Activated CD4-positive, alpha-beta T cell treated with anti-CD3 and anti-CD28 coated beads for 36 hours (primary cell): ENCODE measurements at regions of chr21 and their contacts with region 1.

Region 1: DNA sequence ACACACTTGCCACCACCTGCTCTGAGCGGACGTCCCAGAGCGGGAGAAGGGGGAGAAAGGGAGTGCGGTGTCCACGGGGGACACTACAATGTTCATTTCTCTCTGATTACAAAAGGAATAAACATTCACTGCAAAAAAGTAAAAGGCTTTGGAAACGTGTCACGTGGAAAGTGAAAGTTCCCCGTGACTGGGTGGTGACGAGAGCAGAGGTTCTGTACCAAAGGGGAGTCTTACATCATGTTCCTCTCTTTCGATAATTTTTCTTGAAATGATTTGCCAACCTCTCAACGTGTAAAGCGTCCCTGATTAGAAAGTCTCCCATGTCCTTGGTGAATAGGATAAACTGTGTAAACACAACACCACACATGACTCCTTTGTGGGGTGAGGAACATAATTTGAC is 22.0 kb upstream of the PRDM15 start:
- DNase-seq: peak; percentile 79
- ATAC-seq: peak; percentile 74
- H3K4me3 Mint-ChIP-seq: peak overlapping the region; percentile 32
- H3K27ac Mint-ChIP-seq: peak overlapping the region; percentile 95
- H3K4me1 Mint-ChIP-seq: peaks cover 35% of the 10 kb centered on the region
- H3K27me3 Mint-ChIP-seq: no peaks in the 10 kb centered on the region

Region 2: DNA sequence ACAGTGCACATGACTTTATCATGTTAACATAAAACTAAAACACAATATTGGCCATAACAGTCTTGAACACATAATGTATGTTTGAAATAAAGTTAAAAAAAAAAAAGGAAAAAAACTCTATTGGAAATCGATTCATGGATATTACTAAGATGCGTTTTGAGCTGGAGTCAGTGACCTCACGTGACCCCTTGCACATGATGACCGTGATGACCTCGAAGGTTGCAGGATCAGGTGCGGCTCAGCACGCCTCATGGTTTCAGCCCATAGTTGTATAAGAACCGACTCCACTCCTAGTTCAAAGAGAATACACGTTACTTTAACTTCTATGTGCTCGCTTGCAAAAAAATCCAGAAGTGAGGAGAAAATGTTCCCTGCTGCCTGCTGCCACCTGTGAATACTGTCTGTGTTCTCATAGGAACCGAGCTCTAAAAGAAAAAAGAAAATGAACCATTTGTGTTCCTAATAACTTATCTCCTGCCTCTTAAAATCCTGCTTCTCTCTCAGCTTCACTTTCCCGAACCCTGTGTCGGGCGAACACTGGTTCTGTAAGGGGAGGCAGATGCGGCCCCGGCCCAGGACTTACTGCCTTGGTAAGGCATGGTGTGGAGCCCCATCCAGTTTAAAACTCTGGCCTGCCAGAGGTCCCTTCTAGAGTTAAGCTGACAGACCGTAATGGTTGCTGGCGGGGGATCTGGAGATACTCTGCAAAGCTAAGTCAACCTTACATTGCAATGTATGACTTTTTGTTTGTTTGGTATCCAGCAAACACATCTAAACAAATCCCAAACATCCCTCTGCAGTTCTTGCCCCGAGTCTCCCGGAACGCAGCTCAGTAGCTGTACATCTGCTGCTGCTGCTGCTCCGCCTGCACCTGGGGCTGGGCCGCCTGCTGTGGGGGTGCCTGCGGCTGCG is 100.4 kb before region 1 on chr21:
- CTCF ChIA-PET with region 1: no interaction called
- POLR2A ChIA-PET with region 1: no interaction called
- intact Hi-C with region 1: no loop called
- DNase-seq: no peak
- ATAC-seq: no peak
- H3K4me3 Mint-ChIP-seq: no peak overlapping the region
- H3K27ac Mint-ChIP-seq: no peak overlapping the region
- H3K4me1 Mint-ChIP-seq: no peaks in the 10 kb centered on the region
- H3K27me3 Mint-ChIP-seq: no peaks in the 10 kb centered on the region

Region 3: GRCh38 chr21:41921021-41921420 is 19.9 kb after region 1 on chr21:
- CTCF ChIA-PET with region 1: interaction called, 7 read pairs
- POLR2A ChIA-PET with region 1: no interaction called
- intact Hi-C with region 1: loop called in 1 of 2 experiments (anchors 1 kb)
- DNase-seq: no peak
- ATAC-seq: no peak
- H3K4me3 Mint-ChIP-seq: no peak overlapping the region
- H3K27ac Mint-ChIP-seq: no peak overlapping the region
- H3K4me1 Mint-ChIP-seq: peaks cover 40% of the 10 kb centered on the region
- H3K27me3 Mint-ChIP-seq: no peaks in the 10 kb centered on the region

Region 4: DNA sequence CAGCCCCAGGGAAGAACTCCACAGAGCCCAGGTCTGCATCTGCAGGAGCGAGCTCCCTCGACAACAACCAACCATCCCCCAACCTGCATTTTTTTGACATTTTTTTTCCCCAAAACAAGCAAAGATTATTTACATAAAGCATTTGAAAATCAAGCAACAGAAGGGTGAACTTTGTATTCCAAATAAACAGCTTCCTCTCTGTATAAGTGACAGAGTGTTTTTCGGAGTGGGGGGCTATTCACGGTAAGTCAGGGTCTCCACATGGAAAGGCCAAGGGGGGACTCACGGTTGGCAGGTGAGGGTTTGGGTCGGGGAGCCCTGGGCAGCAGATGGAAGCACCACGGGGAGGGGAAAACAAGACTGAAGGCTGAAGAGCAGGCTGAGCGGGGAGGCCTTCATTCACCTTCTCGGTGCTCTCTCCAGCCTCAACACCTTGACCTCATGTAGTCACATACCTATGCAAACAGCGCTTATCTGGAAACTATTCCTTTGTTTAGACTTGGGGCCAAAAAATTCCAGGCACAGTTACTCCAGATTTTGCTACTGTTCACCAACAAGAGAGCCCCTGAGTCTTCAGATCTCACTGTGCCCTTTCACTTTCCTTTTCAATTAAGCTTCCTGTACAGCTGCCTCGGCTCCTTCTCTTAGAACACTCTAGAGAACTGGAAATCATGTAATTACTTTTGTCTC is 25.2 kb after region 1 on chr21:
- CTCF ChIA-PET with region 1: interaction called, 7 read pairs
- POLR2A ChIA-PET with region 1: interaction called, 6 read pairs
- intact Hi-C with region 1: loop called in 1 of 2 experiments (anchors 1 kb)
- DNase-seq: peak; percentile 35
- ATAC-seq: peak; percentile 82
- H3K4me3 Mint-ChIP-seq: peak overlapping the region; percentile 86
- H3K27ac Mint-ChIP-seq: peak overlapping the region; percentile 99
- H3K4me1 Mint-ChIP-seq: peaks cover 59% of the 10 kb centered on the region
- H3K27me3 Mint-ChIP-seq: no peaks in the 10 kb centered on the region